ENCODE measurements at regions of chr7 and their contacts with region 1.

Region 1: GRCh38 chr7:135801045-135801693 is 52.6 kb upstream of the FAM180A start:
- DNase-seq: peak; percentile 34
- H3K4me3 ChIP-seq: no peak overlapping the region
- H3K27ac ChIP-seq: no peak overlapping the region
- H3K27me3 ChIP-seq: no peaks in the 10 kb centered on the region
- CTCF ChIP-seq: peak; percentile 85

Region 2: GRCh38 chr7:135672560-135673359 is 128.4 kb before region 1 on chr7:
- CTCF ChIA-PET with region 1: interaction called, 10 read pairs
- POLR2A ChIA-PET with region 1: interaction called, 3 read pairs
- DNase-seq: peak; percentile 58
- H3K4me3 ChIP-seq: no peak overlapping the region
- H3K27ac ChIP-seq: no peak overlapping the region
- H3K27me3 ChIP-seq: no peaks in the 10 kb centered on the region
- CTCF ChIP-seq: peak; percentile 89

Region 3: DNA sequence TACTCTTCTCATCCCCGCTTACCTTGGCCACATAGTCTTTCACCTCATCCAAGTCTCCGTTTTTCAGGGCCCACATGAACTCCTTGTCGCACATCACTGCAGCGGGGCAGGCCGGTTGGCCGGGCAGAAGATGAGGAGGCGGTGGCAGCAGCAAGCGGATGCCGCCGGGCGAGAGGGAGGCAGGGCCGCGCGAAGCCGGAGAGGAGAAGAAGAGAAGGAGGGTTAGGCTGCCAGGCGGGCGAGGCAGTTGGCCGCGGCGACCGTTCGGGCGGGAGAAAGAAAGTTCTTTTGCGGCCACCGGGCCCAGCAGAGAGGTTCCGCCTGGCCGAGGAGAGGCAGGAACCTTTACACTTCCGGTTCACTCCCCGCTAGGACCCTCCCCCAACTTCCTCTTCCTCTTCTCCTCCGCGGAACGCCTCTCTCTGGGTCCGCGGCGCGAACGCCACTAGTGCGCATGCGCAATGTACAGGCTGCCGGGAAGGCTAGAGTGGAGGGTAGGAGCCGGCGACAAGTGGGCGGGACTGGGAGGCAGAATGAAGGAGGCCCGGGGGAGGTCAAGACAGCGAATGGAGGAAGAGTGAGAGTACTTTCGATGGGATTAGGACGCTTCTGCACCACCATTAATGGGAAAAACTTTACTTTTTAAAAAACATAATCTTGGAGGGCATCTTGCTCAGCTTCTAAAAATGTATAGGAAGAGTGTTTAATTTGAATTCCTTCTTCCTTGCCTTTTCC is 176.0 kb after region 1 on chr7 and contains the start of gene MTPN:
- CTCF ChIA-PET with region 1: interaction called, 10 read pairs
- POLR2A ChIA-PET with region 1: no interaction called
- DNase-seq: peak; percentile 90
- H3K4me3 ChIP-seq: peak within 1 kb of the TSS; percentile 90
- H3K27ac ChIP-seq: peak within 1 kb of the TSS; percentile 63
- H3K27me3 ChIP-seq: no peaks in the 10 kb centered on the region
- CTCF ChIP-seq: no peak
- polyA plus RNA-seq, gene MTPN: 207 and 260 TPM in 2 replicates

Region 4: GRCh38 chr7:136000288-136000913 is 199.2 kb after region 1 on chr7:
- CTCF ChIA-PET with region 1: interaction called, 175 read pairs
- POLR2A ChIA-PET with region 1: no interaction called
- DNase-seq: no peak
- H3K4me3 ChIP-seq: no peak overlapping the region
- H3K27ac ChIP-seq: no peak overlapping the region
- H3K27me3 ChIP-seq: no peaks in the 10 kb centered on the region
- CTCF ChIP-seq: no peak

Region 5: GRCh38 chr7:136016649-136017395 is 215.7 kb after region 1 on chr7:
- CTCF ChIA-PET with region 1: interaction called, 175 read pairs
- POLR2A ChIA-PET with region 1: no interaction called
- DNase-seq: no peak
- H3K4me3 ChIP-seq: no peak overlapping the region
- H3K27ac ChIP-seq: no peak overlapping the region
- H3K27me3 ChIP-seq: no peaks in the 10 kb centered on the region
- CTCF ChIP-seq: no peak

Measured in AG04450 (cell line).